K562 (cell line): ENCODE measurements at regions of chr15 and their contacts with region 1.

Region 1: DNA sequence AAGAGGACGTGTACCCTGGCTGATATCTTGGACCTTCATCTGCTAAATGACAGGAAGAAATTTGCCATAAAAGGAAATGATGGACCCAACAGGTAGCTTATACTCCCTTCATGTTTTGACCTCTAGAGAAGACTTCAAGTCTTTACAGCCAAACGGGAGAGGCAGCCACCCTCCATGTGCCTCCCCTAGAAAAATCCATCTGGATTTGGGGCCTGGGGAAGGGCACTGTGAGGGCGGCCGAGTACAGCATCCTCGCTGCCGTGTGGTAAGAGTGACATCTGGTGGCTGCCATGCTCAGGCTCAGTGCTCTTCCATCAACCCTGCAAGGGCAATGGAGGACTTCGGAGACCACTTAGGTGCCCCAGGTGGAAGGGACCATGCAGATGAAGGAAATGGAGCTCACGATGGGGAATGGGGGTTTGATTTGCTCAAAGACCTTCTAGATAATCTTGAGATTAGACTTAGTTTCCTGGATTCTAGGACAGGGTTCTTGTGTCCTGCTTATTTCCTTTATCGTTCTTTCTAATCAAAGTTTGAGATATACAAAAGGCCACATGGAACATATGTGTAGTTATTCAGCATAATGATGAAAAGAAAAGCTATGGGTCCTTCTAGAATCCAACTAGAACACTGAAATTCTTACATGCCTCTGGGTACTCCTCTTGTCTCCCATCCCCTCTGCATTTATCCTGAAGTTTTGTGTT is 44.4 kb downstream of the AQP9 start:
- DNase-seq: peak; percentile 63 to 84 (median 72)
- ATAC-seq: peak; percentile 90
- H3K4me3 ChIP-seq: no peak overlapping the region
- H3K27ac ChIP-seq: no peak overlapping the region
- H3K4me1 ChIP-seq: peaks cover 8 to 46% of the 10 kb centered on the region in 2 experiments
- H3K27me3 ChIP-seq: no peaks in the 10 kb centered on the region
- CTCF ChIP-seq: peak; percentile 91 to 96 (median 94)
- EP300 ChIP-seq: no peak; the same call in 1 of the 2 replicates
- POLR2A ChIP-seq: no peak
- RAD21 ChIP-seq: peak; percentile 98 to 100

Region 2: GRCh38 chr15:57561041-57561711 is 621.4 kb before region 1 on chr15:
- CTCF ChIA-PET with region 1: interaction called, 5 read pairs
- POLR2A ChIA-PET with region 1: no interaction called
- in situ Hi-C with region 1: loop called (anchors 10 kb)
- intact Hi-C with region 1: loop called (anchors 2 kb)
- DNase-seq: peak; percentile 71 to 82 (median 76)
- ATAC-seq: peak; percentile 98
- H3K4me3 ChIP-seq: no peak overlapping the region
- H3K27ac ChIP-seq: no peak overlapping the region
- H3K4me1 ChIP-seq: no peaks in the 10 kb centered on the region; a peak in 1 of 5 replicates
- H3K27me3 ChIP-seq: peaks cover 10 to 35% of the 10 kb centered on the region in 2 experiments
- CTCF ChIP-seq: peak; percentile 83 to 93 (median 84)
- EP300 ChIP-seq: no peak
- POLR2A ChIP-seq: no peak
- RAD21 ChIP-seq: peak; percentile 56 to 78

Region 3: DNA sequence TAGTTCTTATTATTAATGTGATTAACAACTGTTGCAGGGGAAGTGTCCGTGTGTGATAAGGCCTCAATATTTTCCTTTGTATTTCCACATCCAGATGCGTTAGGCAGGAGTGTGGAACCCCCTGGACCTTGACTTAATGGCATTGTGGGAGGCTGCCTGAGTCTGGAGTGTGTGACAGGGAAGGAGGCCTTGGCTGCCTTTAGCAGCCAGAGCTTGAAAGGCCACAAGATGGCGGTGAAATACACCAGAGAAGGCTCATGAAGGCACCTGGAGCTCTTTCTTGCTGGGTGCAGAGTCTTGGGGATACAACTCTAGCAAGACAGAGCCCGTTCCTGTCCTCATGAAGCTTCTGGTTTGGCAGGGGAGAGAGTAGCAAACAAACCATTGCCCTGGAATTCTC is 439.2 kb before region 1 on chr15:
- CTCF ChIA-PET with region 1: interaction called, 3 read pairs
- POLR2A ChIA-PET with region 1: no interaction called
- in situ Hi-C with region 1: loop called (anchors 10 kb)
- intact Hi-C with region 1: no loop called
- DNase-seq: peak in 2 of 4 experiments; percentile 15 to 32
- ATAC-seq: peak; percentile 80
- H3K4me3 ChIP-seq: no peak overlapping the region
- H3K27ac ChIP-seq: no peak overlapping the region
- H3K4me1 ChIP-seq: peaks cover 0 to 2% of the 10 kb centered on the region in 2 experiments; a peak in 1 of 5 replicates
- H3K27me3 ChIP-seq: peaks cover 0 to 25% of the 10 kb centered on the region in 2 experiments; a peak in 3 of 5 replicates
- CTCF ChIP-seq: peak; percentile 36 to 47 (median 39); a peak in 5 of 6 replicates
- EP300 ChIP-seq: no peak
- POLR2A ChIP-seq: no peak
- RAD21 ChIP-seq: peak; percentile 34 to 53

Region 4: DNA sequence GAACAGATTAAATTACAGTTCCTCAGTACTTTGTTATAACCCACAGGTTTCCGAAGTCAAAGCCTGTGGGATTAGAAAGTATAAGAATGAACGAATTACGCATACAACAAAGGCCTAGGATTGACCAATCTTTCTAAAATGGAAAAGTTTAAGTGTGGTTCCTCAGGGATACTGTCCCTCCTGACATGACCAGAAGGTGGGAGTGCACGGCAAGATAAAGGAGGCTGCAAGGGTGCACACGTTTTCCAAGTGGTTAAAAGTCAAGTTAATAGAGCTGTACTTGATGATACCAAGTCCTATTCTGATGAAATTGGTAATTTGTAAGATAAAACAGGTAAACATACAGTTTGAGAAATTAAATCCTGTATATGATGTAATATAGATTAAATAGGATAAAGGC is 213.3 kb before region 1 on chr15:
- CTCF ChIA-PET with region 1: interaction called, 13 read pairs
- POLR2A ChIA-PET with region 1: no interaction called
- in situ Hi-C with region 1: no loop called
- intact Hi-C with region 1: no loop called
- DNase-seq: no peak
- ATAC-seq: peak; percentile 71
- H3K4me3 ChIP-seq: no peak overlapping the region
- H3K27ac ChIP-seq: no peak overlapping the region
- H3K4me1 ChIP-seq: no peaks in the 10 kb centered on the region
- H3K27me3 ChIP-seq: no peaks in the 10 kb centered on the region
- CTCF ChIP-seq: peak; percentile 37 to 48 (median 37); a peak in 4 of 6 replicates
- EP300 ChIP-seq: no peak
- POLR2A ChIP-seq: no peak
- RAD21 ChIP-seq: peak; percentile 38 to 43; a peak in 3 of 4 replicates

Region 5: DNA sequence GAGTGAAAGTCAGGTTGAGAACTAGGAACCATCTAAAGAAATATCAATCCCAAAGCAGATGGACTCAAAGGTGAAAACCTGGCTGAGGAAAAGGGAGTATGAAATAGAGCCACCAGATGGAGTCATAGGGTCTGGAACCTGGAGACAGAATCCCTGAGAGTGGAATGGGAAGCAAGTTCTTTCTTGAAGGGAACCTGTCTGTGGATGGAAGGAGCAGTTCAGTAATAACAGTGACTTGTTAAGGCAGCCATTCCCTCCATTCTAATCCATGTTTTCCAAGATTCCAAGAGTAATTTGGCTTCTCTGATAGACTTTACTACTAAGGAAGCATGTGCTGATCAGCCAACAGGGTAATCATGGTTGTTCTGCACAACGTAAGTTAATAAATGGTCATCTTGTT is 66.9 kb before region 1 on chr15:
- CTCF ChIA-PET with region 1: interaction called, 5 read pairs
- POLR2A ChIA-PET with region 1: no interaction called
- in situ Hi-C with region 1: no loop called
- intact Hi-C with region 1: loop called (anchors 1 kb)
- DNase-seq: peak; percentile 20 to 63 (median 34)
- ATAC-seq: peak; percentile 19; the same call in 2 of the 3 replicates
- H3K4me3 ChIP-seq: no peak overlapping the region
- H3K27ac ChIP-seq: no peak overlapping the region
- H3K4me1 ChIP-seq: peaks cover 4 to 52% of the 10 kb centered on the region in 2 experiments; a peak in 4 of 5 replicates
- H3K27me3 ChIP-seq: no peaks in the 10 kb centered on the region
- CTCF ChIP-seq: peak; percentile 43 to 60 (median 49); a peak in 4 of 6 replicates
- EP300 ChIP-seq: no peak; the same call in 1 of the 2 replicates
- POLR2A ChIP-seq: no peak
- RAD21 ChIP-seq: peak; percentile 69 to 89

Region 6: DNA sequence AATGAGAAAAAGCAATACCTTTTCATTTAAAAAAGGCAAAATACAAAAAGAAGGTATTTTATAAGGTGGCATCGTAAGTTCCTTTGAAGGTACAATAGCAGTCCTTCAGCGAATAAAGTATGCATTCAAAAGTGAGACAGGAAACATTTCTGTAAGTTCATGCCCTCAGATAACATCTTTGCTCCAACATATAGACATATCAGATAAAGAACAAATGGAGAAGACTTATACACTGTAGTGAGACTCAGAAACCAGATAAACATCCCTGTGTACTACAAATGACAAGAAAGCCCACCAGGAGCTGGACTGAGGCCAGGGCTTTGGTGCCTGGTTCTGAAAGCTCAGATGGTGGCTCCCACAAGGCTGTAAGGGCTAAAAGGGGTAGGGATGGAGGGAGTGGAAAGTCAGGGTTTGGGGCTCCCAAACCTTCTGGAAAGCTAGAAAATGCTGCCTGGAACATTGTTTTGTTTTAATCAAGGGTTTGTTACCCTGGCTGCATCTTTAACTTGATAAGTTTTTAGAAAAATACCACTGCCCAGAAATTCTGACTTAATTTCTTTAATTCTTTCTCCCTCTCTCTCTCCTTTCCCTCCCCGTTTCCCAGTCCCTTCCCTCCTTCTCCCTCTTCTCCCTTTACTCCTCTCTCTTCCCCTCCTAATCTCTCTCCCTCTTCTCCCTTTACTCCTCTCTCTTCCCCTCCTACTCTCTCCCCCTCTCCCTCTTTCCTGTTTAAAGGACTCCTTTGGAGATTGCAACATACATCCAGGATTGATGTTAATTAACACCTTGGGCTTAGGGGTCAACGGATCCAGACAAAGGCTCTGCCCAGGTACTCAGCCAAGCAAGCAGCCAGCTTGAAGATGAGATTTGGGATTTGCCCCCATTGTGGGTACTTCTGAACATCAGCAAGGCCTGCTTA is 81.7 kb after region 1 on chr15:
- CTCF ChIA-PET with region 1: no interaction called
- POLR2A ChIA-PET with region 1: no interaction called
- in situ Hi-C with region 1: no loop called
- intact Hi-C with region 1: no loop called
- DNase-seq: no peak
- ATAC-seq: no peak
- H3K4me3 ChIP-seq: no peak overlapping the region
- H3K27ac ChIP-seq: no peak overlapping the region
- H3K4me1 ChIP-seq: peaks cover 0 to 10% of the 10 kb centered on the region in 2 experiments; a peak in 2 of 5 replicates
- H3K27me3 ChIP-seq: no peaks in the 10 kb centered on the region
- CTCF ChIP-seq: no peak
- EP300 ChIP-seq: no peak
- POLR2A ChIP-seq: no peak
- RAD21 ChIP-seq: no peak